ENCODE measurements at regions of chr21 and their contacts with region 1.

Region 1: GRCh38 chr21:25639551-25640201 is 618 bp downstream of the JAM2 start:
- DNase-seq: peak; percentile 56
- H3K4me3 ChIP-seq: peak overlapping the region; percentile 70
- H3K27ac ChIP-seq: no peak overlapping the region
- H3K4me1 ChIP-seq: peaks cover 19% of the 10 kb centered on the region
- CTCF ChIP-seq: peak; percentile 46; the same call in 1 of the 2 replicates

Region 2: GRCh38 chr21:24881511-24881910 is 758.2 kb before region 1 on chr21:
- CTCF ChIA-PET with region 1: no interaction called
- POLR2A ChIA-PET with region 1: no interaction called
- intact Hi-C with region 1: no loop called
- DNase-seq: no peak
- H3K4me3 ChIP-seq: no peak overlapping the region
- H3K27ac ChIP-seq: no peak overlapping the region
- H3K4me1 ChIP-seq: no peaks in the 10 kb centered on the region
- CTCF ChIP-seq: no peak

Region 3: DNA sequence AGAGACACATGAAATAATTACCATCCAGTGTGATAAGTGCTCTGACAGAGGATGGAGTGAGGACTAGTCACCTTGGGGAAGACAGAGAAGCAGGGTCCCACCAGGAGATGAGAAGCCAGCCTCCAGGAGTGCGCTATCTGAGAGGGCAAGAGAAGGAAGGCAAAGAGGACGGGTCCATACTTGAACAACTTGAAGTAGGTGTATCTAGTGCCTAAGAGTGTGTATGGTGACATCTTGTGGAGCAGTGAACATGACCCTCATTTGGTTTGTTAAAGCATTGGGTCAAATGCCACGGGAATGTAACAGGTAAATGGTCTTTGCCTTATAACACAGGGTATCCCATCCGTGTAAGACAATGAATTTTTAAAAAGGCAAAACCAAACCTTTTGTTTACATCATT is 72.2 kb before region 1 on chr21:
- CTCF ChIA-PET with region 1: no interaction called
- POLR2A ChIA-PET with region 1: no interaction called
- intact Hi-C with region 1: loop called (anchors 2 kb)
- DNase-seq: no peak
- H3K4me3 ChIP-seq: no peak overlapping the region
- H3K27ac ChIP-seq: no peak overlapping the region
- H3K4me1 ChIP-seq: peaks cover 28% of the 10 kb centered on the region
- CTCF ChIP-seq: no peak; the same call in 1 of the 2 replicates

Region 4: GRCh38 chr21:25670726-25671125 is 31.1 kb after region 1 on chr21:
- CTCF ChIA-PET with region 1: no interaction called
- POLR2A ChIA-PET with region 1: no interaction called
- intact Hi-C with region 1: no loop called
- DNase-seq: no peak
- H3K4me3 ChIP-seq: no peak overlapping the region
- H3K27ac ChIP-seq: no peak overlapping the region
- H3K4me1 ChIP-seq: no peaks in the 10 kb centered on the region
- CTCF ChIP-seq: no peak

Region 5: DNA sequence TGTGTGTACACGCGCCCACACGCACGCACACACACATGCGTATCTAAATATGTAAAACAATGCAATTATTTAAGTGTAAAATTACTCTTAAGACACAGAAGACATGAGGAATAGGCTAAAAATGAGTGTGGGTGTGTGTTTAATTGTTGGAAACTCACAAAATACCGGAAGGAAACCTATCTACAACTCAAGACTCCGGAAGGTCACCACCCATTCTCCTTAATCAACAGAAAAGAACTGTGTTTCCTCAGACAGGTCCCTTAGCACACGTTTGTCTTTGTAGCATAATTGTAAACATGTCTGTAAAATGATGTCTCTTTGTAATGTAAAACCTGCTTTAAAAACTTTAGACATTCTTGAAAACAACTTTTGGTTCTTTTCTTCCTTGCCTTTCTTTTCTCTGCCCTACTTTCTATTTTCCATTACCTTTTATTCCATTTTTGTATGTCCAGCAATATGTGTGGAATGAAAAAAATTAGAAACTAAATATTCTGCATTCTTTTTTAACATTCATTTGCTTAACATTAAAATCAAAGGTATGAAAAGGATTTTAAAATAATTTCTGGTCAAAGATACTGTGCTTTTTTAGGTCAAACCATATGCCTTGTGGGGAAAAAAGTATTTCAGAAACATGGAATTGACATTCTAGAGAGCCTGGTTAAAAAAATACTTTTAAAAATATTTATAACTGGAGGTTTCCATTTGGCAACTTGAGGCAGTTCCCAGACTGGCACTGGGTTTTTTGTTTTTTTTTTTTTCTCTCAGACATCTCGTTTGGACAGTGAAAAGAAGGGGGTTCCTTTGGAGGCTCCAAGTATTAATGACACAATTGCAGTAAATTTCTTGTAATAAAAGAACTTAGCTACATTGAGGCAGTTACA is 48.8 kb after region 1 on chr21:
- CTCF ChIA-PET with region 1: no interaction called
- POLR2A ChIA-PET with region 1: no interaction called
- intact Hi-C with region 1: loop called (anchors 5 kb)
- DNase-seq: no peak
- H3K4me3 ChIP-seq: no peak overlapping the region
- H3K27ac ChIP-seq: no peak overlapping the region
- H3K4me1 ChIP-seq: no peaks in the 10 kb centered on the region
- CTCF ChIP-seq: no peak

Region 6: DNA sequence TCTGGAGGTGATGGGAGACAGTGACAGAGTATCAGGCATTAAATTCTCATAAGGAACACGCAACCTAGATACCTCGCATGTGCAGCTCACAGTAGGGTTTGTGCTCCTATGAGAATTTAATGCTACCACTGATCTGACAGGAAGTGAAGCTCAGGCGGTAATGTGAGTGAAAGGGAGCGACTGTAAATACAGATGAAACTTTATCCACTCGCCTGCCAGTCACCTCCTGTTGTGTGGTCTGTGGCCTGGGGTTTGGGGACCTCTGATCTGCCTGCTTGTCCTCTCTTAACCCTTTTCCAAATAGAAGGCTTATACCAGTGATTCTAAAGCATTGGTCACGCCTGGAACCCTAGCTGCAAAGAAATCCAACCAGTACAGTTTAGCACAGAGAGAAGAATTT is 110.4 kb after region 1 on chr21:
- CTCF ChIA-PET with region 1: no interaction called
- POLR2A ChIA-PET with region 1: no interaction called
- intact Hi-C with region 1: no loop called
- DNase-seq: no peak
- H3K4me3 ChIP-seq: no peak overlapping the region
- H3K27ac ChIP-seq: no peak overlapping the region
- H3K4me1 ChIP-seq: no peaks in the 10 kb centered on the region
- CTCF ChIP-seq: no peak

Region 7: DNA sequence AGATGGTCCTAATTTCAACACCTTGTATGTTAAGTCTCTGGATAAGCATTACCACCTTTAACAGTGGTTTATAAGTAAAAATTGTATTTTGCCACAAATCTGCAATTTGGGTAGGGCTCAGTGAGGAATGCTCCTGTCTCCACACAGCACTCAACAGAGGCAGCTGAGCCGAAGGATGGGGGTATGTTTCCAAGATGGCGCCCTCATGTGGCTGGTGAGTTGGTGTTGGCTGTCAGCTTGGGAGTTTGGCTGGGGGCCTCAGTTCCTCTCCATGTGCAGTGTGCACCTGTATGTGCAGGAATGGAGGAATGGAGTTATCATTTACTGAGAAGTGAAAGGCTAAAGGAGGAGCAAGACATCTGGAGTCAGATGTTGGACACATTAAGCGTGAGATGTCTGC is 231.9 kb after region 1 on chr21:
- CTCF ChIA-PET with region 1: no interaction called
- POLR2A ChIA-PET with region 1: no interaction called
- intact Hi-C with region 1: no loop called
- DNase-seq: peak; percentile 2
- H3K4me3 ChIP-seq: no peak overlapping the region
- H3K27ac ChIP-seq: no peak overlapping the region
- H3K4me1 ChIP-seq: no peaks in the 10 kb centered on the region
- CTCF ChIP-seq: peak; percentile 45